Posterior cingulate gyrus (tissue), 11 donors: ENCODE measurements at regions of chr10 and their contacts with region 1.

Region 1: GRCh38 chr10:28532383-28533175 is at the start of gene WAC:
- DNase-seq: peak; percentile 91 to 99 (median 95)

Region 2: GRCh38 chr10:28302638-28303488 is 229.7 kb before region 1 on chr10 and contains the start of gene MPP7:
- intact Hi-C with region 1: loop called (anchors 5 kb)
- DNase-seq: peak; percentile 93 to 99 (median 96)

Region 3: DNA sequence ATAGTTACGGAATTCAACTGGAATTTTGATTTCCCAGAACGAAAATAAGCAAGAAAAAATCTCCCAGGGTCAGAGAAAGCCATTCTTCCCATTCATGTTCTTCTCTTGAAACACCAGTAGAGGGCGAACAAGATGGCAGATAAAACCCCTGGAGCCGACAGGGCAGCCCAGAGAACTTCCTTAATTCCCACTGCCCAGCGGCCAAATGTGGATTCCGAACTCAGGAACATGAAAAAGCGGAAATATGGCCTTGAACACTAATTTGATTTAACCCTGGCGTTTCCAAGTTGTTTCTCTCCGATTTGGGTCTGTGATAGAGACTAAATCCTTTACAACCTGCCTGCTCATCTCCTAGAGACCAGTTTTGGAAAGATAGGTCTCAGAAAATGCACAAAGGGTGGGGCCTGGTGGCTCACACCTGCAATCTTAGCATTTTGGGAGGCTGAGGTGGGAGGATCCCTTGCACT is 100.3 kb before region 1 on chr10:
- intact Hi-C with region 1: loop called (anchors 5 kb)
- DNase-seq: peak in 7 of 10 donors; percentile 35 to 89 (median 46)